HCT116 (cell line): ENCODE measurements at regions of chr17 and their contacts with region 1.

Region 1: GRCh38 chr17:18260332-18261144 is at the start of gene MIEF2:
- DNase-seq: peak; percentile 90
- ATAC-seq: peak; percentile 83
- H3K4me3 ChIP-seq: peak within 1 kb of the TSS; percentile 55 to 86
- H3K27ac ChIP-seq: peak within 1 kb of the TSS; percentile 94
- H3K4me1 ChIP-seq: peaks cover 33 to 43% of the 10 kb centered on the region in 2 experiments
- H3K27me3 ChIP-seq: no peaks in the 10 kb centered on the region
- CTCF ChIP-seq: no peak
- POLR2A ChIP-seq: peak; percentile 9
- RAD21 ChIP-seq: no peak
- total RNA-seq, gene MIEF2: 9.3 TPM

Region 2: DNA sequence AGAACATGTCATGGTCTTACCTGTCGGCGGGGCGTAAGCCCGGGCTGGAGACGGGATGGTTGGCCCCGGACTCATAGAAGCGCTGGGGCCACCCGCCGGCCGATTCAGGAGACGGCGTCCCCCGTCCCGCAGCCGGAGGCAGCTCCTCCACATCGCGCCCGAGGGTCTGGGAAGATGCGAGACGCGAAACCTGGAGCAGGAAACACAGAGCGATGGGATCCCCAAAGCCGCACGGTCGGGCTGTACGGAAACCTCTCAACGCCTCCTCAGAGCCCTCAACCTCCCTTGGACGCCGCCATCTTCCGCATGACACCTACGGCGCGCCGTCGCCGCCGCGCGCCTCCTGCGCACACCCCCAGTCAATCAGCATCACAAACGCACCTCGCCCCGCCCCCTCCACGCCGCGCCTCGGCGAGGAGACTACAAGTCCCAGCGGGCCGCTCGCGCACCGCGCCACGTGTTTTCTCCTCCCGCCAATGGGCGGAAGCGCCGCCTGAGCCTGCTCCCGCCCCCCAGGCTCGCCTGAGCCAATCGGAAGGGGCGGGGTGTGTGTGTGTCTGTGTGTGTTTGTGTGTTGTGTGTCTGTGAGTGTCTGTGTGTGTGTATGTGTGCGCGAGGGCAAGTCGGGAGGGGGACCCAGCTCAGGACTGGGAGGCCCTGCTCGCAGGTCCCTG is 221.5 kb before region 1 on chr17 and contains the starts of genes ATPAF2 and GID4:
- CTCF ChIA-PET with region 1: no interaction called
- POLR2A ChIA-PET with region 1: no interaction called
- RAD21 ChIA-PET with region 1: no interaction called
- intact Hi-C with region 1: no loop called
- DNase-seq: peak; percentile 97
- ATAC-seq: peak; percentile 92
- H3K4me3 ChIP-seq: peak within 1 kb of the TSS; percentile 84 to 85
- H3K27ac ChIP-seq: peak within 1 kb of the TSS; percentile 80
- H3K4me1 ChIP-seq: peaks cover 6 to 21% of the 10 kb centered on the region in 2 experiments; a peak in 3 of 4 replicates
- H3K27me3 ChIP-seq: no peaks in the 10 kb centered on the region
- CTCF ChIP-seq: peak in 1 of 3 experiments; percentile 12; a peak in 1 of 6 replicates
- POLR2A ChIP-seq: peak; percentile 59
- RAD21 ChIP-seq: no peak
- total RNA-seq, gene ATPAF2: 46.1 TPM
- total RNA-seq, gene GID4: 10.8 TPM

Region 3: GRCh38 chr17:18102640-18103039 is 157.9 kb before region 1 on chr17:
- CTCF ChIA-PET with region 1: no interaction called
- POLR2A ChIA-PET with region 1: no interaction called
- RAD21 ChIA-PET with region 1: no interaction called
- intact Hi-C with region 1: no loop called
- DNase-seq: no peak
- ATAC-seq: no peak
- H3K4me3 ChIP-seq: no peak overlapping the region
- H3K27ac ChIP-seq: no peak overlapping the region
- H3K4me1 ChIP-seq: no peaks in the 10 kb centered on the region
- H3K27me3 ChIP-seq: no peaks in the 10 kb centered on the region
- CTCF ChIP-seq: no peak
- POLR2A ChIP-seq: no peak
- RAD21 ChIP-seq: no peak

Region 4: GRCh38 chr17:18225121-18225566 is 35.4 kb before region 1 on chr17:
- CTCF ChIA-PET with region 1: no interaction called
- POLR2A ChIA-PET with region 1: no interaction called
- RAD21 ChIA-PET with region 1: no interaction called
- intact Hi-C with region 1: loop called (anchors 2 kb)
- DNase-seq: peak; percentile 88
- ATAC-seq: peak; percentile 94
- H3K4me3 ChIP-seq: peak overlapping the region; percentile 37 to 46
- H3K27ac ChIP-seq: peak overlapping the region; percentile 10; the same call in 1 of the 2 replicates
- H3K4me1 ChIP-seq: peaks cover 21 to 38% of the 10 kb centered on the region in 2 experiments
- H3K27me3 ChIP-seq: no peaks in the 10 kb centered on the region
- CTCF ChIP-seq: no peak
- POLR2A ChIP-seq: no peak
- RAD21 ChIP-seq: no peak

Region 5: DNA sequence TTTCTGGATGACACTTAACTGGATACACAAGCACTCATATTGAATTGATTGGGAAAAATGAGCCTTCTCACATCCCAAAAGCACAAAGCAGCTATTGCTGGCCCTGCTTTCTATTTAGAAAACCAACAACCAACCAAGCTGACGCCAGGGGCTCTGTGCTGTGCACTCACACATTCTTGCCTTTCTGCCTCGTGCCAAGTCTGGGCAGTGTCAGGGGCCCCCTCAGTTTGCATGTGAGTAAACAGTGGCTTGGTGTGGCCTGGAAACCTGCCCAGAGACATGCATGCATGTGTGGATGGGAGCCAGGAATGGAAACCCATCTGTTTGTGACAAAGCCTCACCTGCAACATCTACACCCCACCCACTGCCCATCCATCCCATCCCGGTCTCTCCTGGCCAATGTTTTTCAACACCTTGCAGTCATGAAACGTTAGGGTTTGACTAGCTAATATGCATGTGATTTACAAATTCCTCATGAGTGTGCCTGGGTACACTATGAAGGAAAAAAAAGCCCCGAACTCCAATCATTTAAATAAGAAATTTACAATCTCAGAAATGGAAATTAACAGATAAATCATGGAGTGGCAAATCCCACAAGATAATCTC is 20.3 kb after region 1 on chr17:
- CTCF ChIA-PET with region 1: no interaction called
- POLR2A ChIA-PET with region 1: no interaction called
- RAD21 ChIA-PET with region 1: no interaction called
- intact Hi-C with region 1: no loop called
- DNase-seq: no peak
- ATAC-seq: no peak
- H3K4me3 ChIP-seq: no peak overlapping the region
- H3K27ac ChIP-seq: no peak overlapping the region
- H3K4me1 ChIP-seq: no peaks in the 10 kb centered on the region
- H3K27me3 ChIP-seq: no peaks in the 10 kb centered on the region
- CTCF ChIP-seq: no peak
- POLR2A ChIP-seq: no peak
- RAD21 ChIP-seq: no peak

Region 6: GRCh38 chr17:18300725-18301480 is 40.4 kb after region 1 on chr17:
- CTCF ChIA-PET with region 1: no interaction called
- POLR2A ChIA-PET with region 1: no interaction called
- RAD21 ChIA-PET with region 1: no interaction called
- intact Hi-C with region 1: no loop called
- DNase-seq: no peak
- ATAC-seq: no peak
- H3K4me3 ChIP-seq: no peak overlapping the region
- H3K27ac ChIP-seq: no peak overlapping the region
- H3K4me1 ChIP-seq: no peaks in the 10 kb centered on the region
- H3K27me3 ChIP-seq: no peaks in the 10 kb centered on the region
- CTCF ChIP-seq: no peak
- POLR2A ChIP-seq: no peak
- RAD21 ChIP-seq: no peak

Region 7: DNA sequence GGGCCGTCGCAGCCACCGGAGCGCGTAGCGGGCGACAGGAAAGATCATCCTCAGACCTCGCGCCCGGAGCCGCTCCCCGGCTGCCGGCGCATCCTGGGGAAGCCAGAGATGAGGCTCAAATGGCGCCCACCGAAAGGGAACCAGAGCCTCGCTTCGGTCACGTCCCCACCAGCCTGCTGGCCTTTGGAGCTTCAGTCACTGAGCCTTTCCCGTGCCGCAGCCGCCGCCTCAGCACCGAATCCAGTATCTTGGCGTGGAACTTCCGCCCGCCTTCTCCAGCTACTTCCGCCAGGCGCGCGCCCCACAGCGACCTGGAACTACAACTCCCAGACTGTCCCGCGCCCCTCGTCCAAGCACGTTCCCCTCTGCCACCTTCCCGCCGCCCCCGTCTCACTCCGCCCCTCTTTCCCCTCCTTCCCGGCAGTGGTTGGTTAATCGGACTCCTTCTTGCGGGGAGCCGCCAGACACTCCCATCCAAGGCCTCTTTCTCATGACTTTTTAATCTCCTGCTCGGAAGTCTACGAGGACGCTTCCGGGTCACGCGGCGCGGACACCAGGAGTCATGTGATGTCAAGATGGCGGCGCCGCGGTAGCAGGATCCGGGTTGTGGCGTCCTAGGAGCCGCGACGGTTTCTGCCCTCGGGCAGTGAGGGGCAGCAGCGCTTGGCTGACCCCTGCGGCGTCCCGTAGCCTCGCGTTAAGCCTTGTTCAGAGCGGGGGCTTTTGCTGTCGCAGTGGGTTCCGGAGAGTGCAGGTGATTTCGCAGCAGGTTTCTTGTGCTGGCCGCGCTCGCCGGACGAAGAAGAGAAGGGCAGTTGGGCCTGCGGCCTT is 54.4 kb after region 1 on chr17 and contains the starts of genes SMCR8 and TOP3A:
- CTCF ChIA-PET with region 1: no interaction called
- POLR2A ChIA-PET with region 1: no interaction called
- RAD21 ChIA-PET with region 1: no interaction called
- intact Hi-C with region 1: loop called (anchors 5 kb)
- DNase-seq: peak; percentile 91
- ATAC-seq: peak; percentile 95
- H3K4me3 ChIP-seq: peak within 1 kb of the TSS; percentile 93
- H3K27ac ChIP-seq: peak within 1 kb of the TSS; percentile 78
- H3K4me1 ChIP-seq: peaks cover 10 to 19% of the 10 kb centered on the region in 2 experiments
- H3K27me3 ChIP-seq: no peaks in the 10 kb centered on the region
- CTCF ChIP-seq: no peak
- POLR2A ChIP-seq: peak; percentile 45
- RAD21 ChIP-seq: no peak
- total RNA-seq, gene SMCR8: 12.7 TPM
- total RNA-seq, gene TOP3A: 48.8 TPM